ENCODE measurements at regions of chr11 and their contacts with region 1.

Region 1: GRCh38 chr11:125923012-125923579 is 18.8 kb downstream of the DDX25 start:
- DNase-seq: peak; percentile 74
- ATAC-seq: peak; percentile 87
- H3K4me3 Mint-ChIP-seq: no peak overlapping the region
- H3K27ac Mint-ChIP-seq: no peak overlapping the region
- H3K4me1 Mint-ChIP-seq: no peaks in the 10 kb centered on the region
- H3K27me3 Mint-ChIP-seq: peaks cover 14% of the 10 kb centered on the region

Region 2: GRCh38 chr11:126115816-126116331 is 192.8 kb after region 1 on chr11:
- CTCF ChIA-PET with region 1: no interaction called
- POLR2A ChIA-PET with region 1: no interaction called
- intact Hi-C with region 1: loop called in 1 of 2 experiments (anchors 10 kb)
- DNase-seq: no peak
- ATAC-seq: no peak
- H3K4me3 Mint-ChIP-seq: no peak overlapping the region
- H3K27ac Mint-ChIP-seq: no peak overlapping the region
- H3K4me1 Mint-ChIP-seq: no peaks in the 10 kb centered on the region
- H3K27me3 Mint-ChIP-seq: no peaks in the 10 kb centered on the region

Region 3: GRCh38 chr11:126122863-126123262 is 199.8 kb after region 1 on chr11:
- CTCF ChIA-PET with region 1: interaction called, 3 read pairs
- POLR2A ChIA-PET with region 1: no interaction called
- intact Hi-C with region 1: loop called (anchors 1 to 10 kb)
- DNase-seq: no peak
- ATAC-seq: no peak
- H3K4me3 Mint-ChIP-seq: no peak overlapping the region
- H3K27ac Mint-ChIP-seq: no peak overlapping the region
- H3K4me1 Mint-ChIP-seq: no peaks in the 10 kb centered on the region
- H3K27me3 Mint-ChIP-seq: no peaks in the 10 kb centered on the region

Region 4: GRCh38 chr11:126194121-126194543 is 271.0 kb after region 1 on chr11:
- CTCF ChIA-PET with region 1: interaction called, 41 read pairs
- POLR2A ChIA-PET with region 1: no interaction called
- intact Hi-C with region 1: loop called (anchors 1 kb)
- DNase-seq: peak; percentile 63
- ATAC-seq: peak; percentile 42
- H3K4me3 Mint-ChIP-seq: no peak overlapping the region
- H3K27ac Mint-ChIP-seq: no peak overlapping the region
- H3K4me1 Mint-ChIP-seq: no peaks in the 10 kb centered on the region
- H3K27me3 Mint-ChIP-seq: no peaks in the 10 kb centered on the region